Spleen (tissue), 13 donors: ENCODE measurements at regions of chr5 and their contacts with region 1.

Region 1: DNA sequence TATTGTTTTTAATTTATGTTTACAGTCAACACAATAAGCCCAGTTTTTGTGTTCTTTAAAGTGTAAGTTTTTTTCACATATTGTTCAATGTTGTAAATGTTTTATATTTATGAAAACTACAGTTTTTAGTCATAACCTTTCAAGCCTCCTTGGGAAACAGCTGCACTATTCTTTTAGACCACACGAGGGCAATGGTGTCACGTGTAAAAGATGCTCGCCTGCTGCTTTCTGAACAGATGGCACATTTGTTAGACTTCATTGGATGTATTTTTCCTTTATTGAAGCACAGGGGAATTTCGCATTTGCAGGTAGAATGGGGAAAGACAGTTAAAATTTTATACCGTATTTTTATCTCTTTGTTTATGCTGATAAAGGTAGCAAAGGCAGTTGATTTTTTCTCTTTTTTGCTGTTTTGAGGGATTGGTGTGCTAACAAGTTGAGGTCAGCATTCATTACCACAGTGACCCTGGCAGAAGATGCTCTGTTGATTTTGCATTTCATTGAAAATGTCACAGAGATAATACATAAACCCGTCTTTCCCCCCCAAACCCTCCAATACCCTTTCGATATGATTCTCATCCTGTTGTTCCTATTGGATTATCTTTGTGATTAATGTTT is 59.0 kb downstream of the MAT2B start:
- DNase-seq: no peak
- H3K4me3 ChIP-seq: no peak overlapping the region
- H3K27ac ChIP-seq: no peak overlapping the region
- H3K4me1 ChIP-seq: peaks cover 7 to 30% (median 22%) of the 10 kb centered on the region in 6 donors
- H3K27me3 ChIP-seq: peaks cover 0 to 43% (median 18%) of the 10 kb centered on the region in 7 donors
- CTCF ChIP-seq: peak; percentile 68 to 92 (median 88)
- POLR2A ChIP-seq: no peak

Region 2: DNA sequence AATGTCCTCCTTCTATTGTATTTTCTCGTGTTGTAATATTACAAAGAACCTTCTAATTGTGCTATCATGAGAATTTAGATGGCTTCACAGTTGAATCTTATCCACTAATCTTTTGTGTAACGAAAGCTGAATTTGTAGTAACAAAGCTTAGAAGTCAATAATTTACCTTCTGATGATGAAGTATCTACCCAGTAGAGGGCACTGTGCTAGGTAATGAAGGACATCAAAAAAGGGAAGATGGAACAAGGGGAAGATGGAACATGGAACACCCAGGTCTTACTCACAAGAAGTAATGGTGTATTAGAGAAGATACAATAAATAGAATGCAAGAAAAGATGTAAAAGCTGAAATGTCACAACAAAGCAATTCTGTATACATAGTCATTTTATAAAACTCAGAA is 258.0 kb before region 1 on chr5:
- intact Hi-C with region 1: no loop called
- DNase-seq: no peak
- H3K4me3 ChIP-seq: no peak overlapping the region
- H3K27ac ChIP-seq: no peak overlapping the region
- H3K4me1 ChIP-seq: no peaks in the 10 kb centered on the region
- H3K27me3 ChIP-seq: no peaks in the 10 kb centered on the region
- CTCF ChIP-seq: peak in 3 of 11 experiments; percentile 12 to 18 (median 12)
- POLR2A ChIP-seq: no peak

Region 3: DNA sequence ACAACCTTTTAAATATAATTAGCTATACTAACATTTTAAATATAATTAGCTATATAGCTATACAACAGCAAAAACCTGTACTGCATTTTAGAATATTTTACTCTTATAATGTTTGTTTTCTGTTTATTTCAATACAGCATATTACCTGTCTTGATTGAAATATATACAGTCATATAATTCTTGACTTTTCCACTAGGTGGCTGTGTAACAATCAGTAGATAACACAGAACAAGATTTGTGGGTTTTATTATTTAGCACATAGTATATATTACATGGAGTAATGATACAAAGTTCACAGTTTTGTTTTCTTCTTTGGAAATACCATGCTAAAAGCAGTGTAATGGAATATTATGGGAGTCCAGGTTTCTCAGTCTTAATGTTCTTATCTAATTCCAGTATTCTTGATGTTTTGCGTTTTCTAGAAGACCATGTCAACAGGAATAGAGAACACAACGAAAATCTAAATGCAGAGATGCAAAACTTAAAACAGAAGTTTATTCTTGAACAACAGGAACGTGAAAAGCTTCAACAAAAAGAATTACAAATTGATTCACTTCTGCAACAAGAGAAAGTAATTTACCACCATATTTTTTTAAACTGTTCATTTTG is 90.7 kb before region 1 on chr5:
- intact Hi-C with region 1: no loop called
- DNase-seq: no peak
- H3K4me3 ChIP-seq: no peak overlapping the region
- H3K27ac ChIP-seq: no peak overlapping the region
- H3K4me1 ChIP-seq: no peaks in the 10 kb centered on the region
- H3K27me3 ChIP-seq: no peaks in the 10 kb centered on the region
- CTCF ChIP-seq: peak in 6 of 11 experiments; percentile 20 to 49 (median 43)
- POLR2A ChIP-seq: no peak

Region 4: DNA sequence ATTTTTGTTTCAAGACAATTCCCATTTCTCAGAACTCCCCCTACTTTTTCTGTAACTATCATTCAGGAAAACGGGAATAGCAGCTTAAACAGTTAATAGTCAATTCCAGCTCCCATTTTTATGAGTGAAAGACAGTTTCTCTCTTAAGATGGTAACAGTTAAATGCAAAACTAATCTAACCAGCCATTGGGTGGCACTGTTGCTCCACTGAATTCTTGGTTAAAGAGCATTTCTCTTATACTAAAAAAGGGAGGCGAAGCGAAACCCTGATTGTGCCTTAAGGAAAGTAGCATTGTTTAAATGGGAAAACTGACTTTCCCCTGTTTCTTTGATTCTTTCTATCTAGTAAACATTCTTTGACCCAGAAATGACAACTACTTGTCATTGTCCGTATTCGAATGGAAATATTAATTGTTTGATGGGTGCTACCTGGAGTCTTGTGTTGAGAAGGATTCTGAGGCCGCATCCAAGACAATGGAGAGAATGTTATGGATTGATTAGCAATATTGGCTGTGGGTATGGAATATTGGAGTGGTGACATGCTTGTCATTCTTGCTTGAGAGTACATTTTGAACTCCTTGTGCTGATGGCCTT is 448.7 kb after region 1 on chr5:
- intact Hi-C with region 1: loop called (anchors 10 kb)
- DNase-seq: no peak
- H3K4me3 ChIP-seq: no peak overlapping the region
- H3K27ac ChIP-seq: no peak overlapping the region
- H3K4me1 ChIP-seq: no peaks in the 10 kb centered on the region
- H3K27me3 ChIP-seq: no peaks in the 10 kb centered on the region
- CTCF ChIP-seq: peak in 10 of 11 experiments; percentile 23 to 69 (median 60)
- POLR2A ChIP-seq: no peak

Region 5: DNA sequence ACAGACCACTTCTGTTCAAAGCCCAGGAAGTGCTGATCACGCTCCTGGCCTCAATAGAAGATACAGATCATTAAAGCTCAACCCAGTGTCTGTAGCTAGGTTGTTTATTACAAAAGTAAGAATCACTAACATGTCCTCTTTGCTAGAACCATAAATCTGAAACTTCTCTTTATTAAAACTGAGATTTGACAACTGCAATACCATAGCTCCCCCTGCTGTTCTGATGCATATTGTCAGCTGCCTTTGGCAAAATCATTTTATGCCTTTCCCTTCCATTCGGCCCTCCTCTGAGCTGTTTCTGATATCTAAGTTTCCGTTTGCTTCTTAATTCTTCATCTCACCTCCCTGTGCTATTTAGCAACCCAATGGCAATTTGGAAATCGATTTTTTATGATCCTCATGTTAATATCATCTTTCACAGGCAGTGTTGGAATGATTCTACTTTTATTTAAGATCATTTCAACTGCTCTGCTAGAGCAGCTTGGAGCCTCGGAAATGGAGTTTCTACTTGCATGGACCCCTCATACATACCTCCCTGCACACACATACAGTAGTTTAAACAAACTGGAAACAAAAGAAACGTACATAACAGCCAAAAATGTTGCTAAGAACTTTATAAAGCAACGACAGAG is 939.8 kb after region 1 on chr5:
- intact Hi-C with region 1: loop called (anchors 2 kb)
- DNase-seq: no peak
- H3K4me3 ChIP-seq: no peak overlapping the region
- H3K27ac ChIP-seq: no peak overlapping the region
- H3K4me1 ChIP-seq: peaks cover 0 to 3% (median 0%) of the 10 kb centered on the region in 6 donors
- H3K27me3 ChIP-seq: no peaks in the 10 kb centered on the region
- CTCF ChIP-seq: peak; percentile 50 to 80 (median 71)
- POLR2A ChIP-seq: no peak